GM13977 (cell line): ENCODE measurements at regions of chr3 and their contacts with region 1.

Region 1: DNA sequence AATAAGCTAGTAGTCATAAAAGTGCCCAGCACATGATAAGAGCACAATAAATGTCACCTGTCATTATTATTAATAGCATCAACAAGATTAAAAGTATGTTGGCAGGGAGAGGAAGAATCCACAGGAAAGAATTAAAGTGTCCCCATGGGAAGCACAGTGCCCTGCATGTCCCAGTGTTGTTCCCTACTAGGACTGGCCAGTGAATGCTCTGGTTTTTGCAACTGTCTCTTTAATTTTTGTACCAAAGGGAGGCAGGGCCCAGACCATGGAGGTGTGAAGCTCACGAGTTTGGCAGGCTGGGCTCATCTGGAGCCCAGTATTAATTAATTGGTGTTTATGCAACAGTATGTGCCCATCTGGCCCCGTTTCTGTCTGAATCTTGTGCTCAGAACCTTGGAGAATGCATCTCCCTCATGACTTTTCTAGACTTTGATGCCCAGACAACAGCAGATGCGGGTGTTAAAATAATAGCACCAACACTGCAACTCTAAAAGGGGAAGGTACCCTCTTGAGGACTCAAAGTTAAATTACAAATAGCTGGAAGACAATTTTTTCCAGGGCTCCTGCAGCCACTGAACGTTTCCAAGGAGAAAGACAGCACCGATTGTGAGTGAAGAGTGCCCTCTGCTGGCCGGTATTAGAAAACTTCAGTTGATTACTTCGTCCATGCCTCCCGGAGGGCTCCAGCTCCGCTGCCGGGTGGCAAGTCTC is 71.9 kb upstream of the SPATA12 start:
- DNase-seq: peak; percentile 61
- CTCF ChIP-seq: peak; percentile 72

Region 2: DNA sequence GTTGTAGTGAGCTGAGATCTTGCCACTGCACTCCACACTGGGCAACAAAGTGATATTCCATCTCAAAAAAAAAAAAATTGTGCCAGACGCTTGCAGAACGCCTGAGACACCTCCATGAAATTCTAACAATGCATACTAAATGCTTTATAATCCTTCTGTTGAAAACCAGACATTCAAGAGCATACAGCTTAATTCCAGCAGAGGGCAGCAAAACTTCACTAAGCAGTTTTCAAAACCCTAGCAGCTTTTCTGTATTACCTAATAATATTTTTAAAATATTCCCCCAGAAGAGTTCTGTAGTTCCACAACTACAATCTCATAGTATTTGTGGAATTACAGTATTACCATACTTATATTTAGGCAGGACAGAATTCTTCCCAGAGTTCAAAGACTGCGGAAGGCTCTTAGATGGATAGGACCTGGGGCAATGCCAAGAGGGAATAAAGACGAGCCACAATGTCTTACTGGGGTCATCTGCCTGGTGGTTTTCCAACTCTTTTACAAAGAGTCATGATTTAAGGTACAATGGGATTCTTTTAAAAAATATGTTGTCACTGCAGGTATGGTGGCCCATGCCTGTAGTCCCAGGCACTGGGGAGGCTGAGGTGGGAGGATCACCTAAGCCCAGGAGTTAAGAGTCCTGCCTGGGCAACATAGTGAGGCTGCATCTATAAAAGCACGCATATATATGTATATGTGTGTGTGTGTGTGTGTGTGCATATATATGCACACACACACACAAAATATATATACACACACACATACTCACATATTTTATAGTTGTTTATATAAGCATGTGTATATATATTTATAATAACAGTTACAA is 285.9 kb before region 1 on chr3:
- in situ Hi-C with region 1: loop called (anchors 5 kb)
- DNase-seq: peak; percentile 49
- CTCF ChIP-seq: peak; percentile 68

Region 3: DNA sequence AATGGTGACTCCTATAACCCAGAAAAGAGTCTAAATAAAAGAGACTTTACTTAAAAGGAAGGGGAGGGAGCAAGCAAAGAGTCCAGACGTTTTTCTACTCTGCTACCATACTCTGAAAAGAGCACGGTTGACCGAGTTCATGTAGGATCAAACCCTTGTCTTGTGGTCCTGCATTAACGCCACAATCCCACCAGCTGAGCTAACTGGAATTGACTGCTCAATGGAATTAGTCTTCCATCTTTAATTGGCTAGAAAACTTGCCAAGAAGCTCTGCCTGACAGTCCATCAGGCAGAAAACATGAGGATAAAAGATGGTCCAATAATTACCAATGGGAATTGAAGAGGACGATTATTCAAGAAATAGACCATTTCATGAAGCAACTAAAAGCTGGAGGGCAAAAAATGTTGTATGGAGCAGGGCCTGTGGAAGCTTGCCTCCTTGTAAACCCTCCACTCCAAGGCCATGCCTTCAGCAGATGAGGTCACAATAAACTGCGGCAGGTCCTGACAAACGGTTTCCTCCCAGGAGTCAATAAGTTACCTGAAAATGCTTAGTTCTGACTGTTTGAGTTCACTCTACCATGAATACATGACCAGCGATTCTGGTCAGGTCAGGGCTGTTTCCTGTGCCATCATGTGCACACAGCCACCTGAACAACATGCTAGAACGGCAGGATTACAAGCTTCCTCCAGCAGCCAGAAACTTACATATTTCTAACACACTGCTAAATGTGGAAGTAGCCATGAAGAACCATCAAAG is 151.2 kb before region 1 on chr3:
- in situ Hi-C with region 1: loop called (anchors 25 kb)
- DNase-seq: no peak
- CTCF ChIP-seq: no peak

Region 4: GRCh38 chr3:57411715-57412114 is 423.1 kb after region 1 on chr3:
- in situ Hi-C with region 1: no loop called
- DNase-seq: no peak
- CTCF ChIP-seq: no peak